ENCODE measurements at regions of chr17 and their contacts with region 1.

Region 1: GRCh38 chr17:31487648-31488263 is 96.3 kb downstream of the RAB11FIP4 start:
- DNase-seq: peak; percentile 95 to 96
- H3K4me3 ChIP-seq: peak overlapping the region; percentile 84
- H3K4me3 Mint-ChIP-seq: peak overlapping the region; percentile 86
- H3K27ac Mint-ChIP-seq: peak overlapping the region; percentile 97
- H3K4me1 ChIP-seq: peaks cover 33% of the 10 kb centered on the region
- H3K4me1 Mint-ChIP-seq: peaks cover 45% of the 10 kb centered on the region
- H3K27me3 ChIP-seq: no peaks in the 10 kb centered on the region
- H3K27me3 Mint-ChIP-seq: no peaks in the 10 kb centered on the region
- CTCF ChIP-seq: peak in 1 of 2 experiments; percentile 40

Region 2: GRCh38 chr17:31437720-31438420 is 49.9 kb before region 1 on chr17:
- CTCF ChIA-PET with region 1: interaction called, 5 read pairs
- POLR2A ChIA-PET with region 1: no interaction called
- intact Hi-C with region 1: loop called (anchors 5 kb)
- DNase-seq: no peak
- H3K4me3 ChIP-seq: no peak overlapping the region
- H3K4me3 Mint-ChIP-seq: no peak overlapping the region
- H3K27ac Mint-ChIP-seq: no peak overlapping the region
- H3K4me1 ChIP-seq: 0 out of 2 replicates have a peak, but pooled peaks cover 6% of the 10 kb centered on the region
- H3K4me1 Mint-ChIP-seq: no peaks in the 10 kb centered on the region
- H3K27me3 ChIP-seq: no peaks in the 10 kb centered on the region
- H3K27me3 Mint-ChIP-seq: no peaks in the 10 kb centered on the region
- CTCF ChIP-seq: no peak

Region 3: DNA sequence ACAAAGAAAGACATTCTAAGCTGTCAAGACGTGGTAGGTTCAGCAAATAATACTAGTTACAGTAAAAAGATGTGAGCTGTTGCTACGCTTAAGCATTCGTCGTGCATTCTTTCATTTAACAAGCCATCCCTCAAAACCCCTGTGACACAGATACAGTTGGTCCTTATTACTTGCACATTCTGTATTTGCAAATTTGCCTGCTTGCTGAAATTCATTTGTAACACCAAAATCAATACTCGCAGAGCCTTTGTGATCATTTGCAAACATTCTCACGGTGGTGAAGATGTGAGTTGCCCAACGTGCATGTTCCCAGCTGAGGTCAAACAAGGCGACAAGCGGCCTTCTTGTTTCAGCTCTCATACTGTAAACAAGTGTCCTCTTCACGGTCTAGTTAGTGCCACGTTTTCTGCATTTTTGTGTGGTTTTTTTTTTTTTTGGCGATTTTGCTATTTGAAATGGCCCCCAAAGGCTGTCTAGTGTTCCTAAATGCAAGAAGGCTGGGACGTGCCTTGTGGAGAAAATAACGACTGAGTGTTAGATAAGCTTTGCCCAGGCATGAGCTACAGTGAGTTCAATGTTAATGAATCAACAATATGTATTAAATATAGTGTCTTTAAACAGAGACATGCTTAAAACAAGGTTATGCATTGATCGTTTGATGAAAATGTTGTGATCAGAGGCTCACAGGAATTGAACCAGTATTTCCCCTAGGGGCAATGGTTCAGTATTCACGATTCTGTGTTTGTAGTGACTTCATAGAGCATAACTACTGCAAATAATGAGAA is 12.2 kb before region 1 on chr17:
- CTCF ChIA-PET with region 1: interaction called, 9 read pairs
- POLR2A ChIA-PET with region 1: interaction called, 5 read pairs
- intact Hi-C with region 1: loop called (anchors 1 kb)
- DNase-seq: peak in 1 of 2 experiments; percentile 41
- H3K4me3 ChIP-seq: no peak overlapping the region
- H3K4me3 Mint-ChIP-seq: no peak overlapping the region
- H3K27ac Mint-ChIP-seq: no peak overlapping the region
- H3K4me1 ChIP-seq: peaks cover 7% of the 10 kb centered on the region
- H3K4me1 Mint-ChIP-seq: peaks cover 18% of the 10 kb centered on the region
- H3K27me3 ChIP-seq: no peaks in the 10 kb centered on the region
- H3K27me3 Mint-ChIP-seq: no peaks in the 10 kb centered on the region
- CTCF ChIP-seq: no peak

Region 4: GRCh38 chr17:31508288-31509094 is 20.7 kb after region 1 on chr17:
- CTCF ChIA-PET with region 1: interaction called, 5 read pairs
- POLR2A ChIA-PET with region 1: interaction called, 4 read pairs
- intact Hi-C with region 1: loop called (anchors 1 kb)
- DNase-seq: peak in 1 of 2 experiments; percentile 54
- H3K4me3 ChIP-seq: no peak overlapping the region
- H3K4me3 Mint-ChIP-seq: no peak overlapping the region
- H3K27ac Mint-ChIP-seq: peak overlapping the region; percentile 82
- H3K4me1 ChIP-seq: peaks cover 26% of the 10 kb centered on the region
- H3K4me1 Mint-ChIP-seq: peaks cover 11% of the 10 kb centered on the region
- H3K27me3 ChIP-seq: no peaks in the 10 kb centered on the region
- H3K27me3 Mint-ChIP-seq: no peaks in the 10 kb centered on the region
- CTCF ChIP-seq: peak in 1 of 2 experiments; percentile 57

Region 5: GRCh38 chr17:31535581-31535981 is 47.8 kb after region 1 on chr17:
- CTCF ChIA-PET with region 1: interaction called, 4 read pairs
- POLR2A ChIA-PET with region 1: interaction called, 14 read pairs
- intact Hi-C with region 1: no loop called
- DNase-seq: no peak
- H3K4me3 ChIP-seq: no peak overlapping the region
- H3K4me3 Mint-ChIP-seq: no peak overlapping the region
- H3K27ac Mint-ChIP-seq: no peak overlapping the region
- H3K4me1 ChIP-seq: no peaks in the 10 kb centered on the region
- H3K4me1 Mint-ChIP-seq: peaks cover 10% of the 10 kb centered on the region
- H3K27me3 ChIP-seq: no peaks in the 10 kb centered on the region
- H3K27me3 Mint-ChIP-seq: no peaks in the 10 kb centered on the region
- CTCF ChIP-seq: no peak